Heart right ventricle (tissue), 16 donors: ENCODE measurements at regions of chr4 and their contacts with region 1.

Region 1: DNA sequence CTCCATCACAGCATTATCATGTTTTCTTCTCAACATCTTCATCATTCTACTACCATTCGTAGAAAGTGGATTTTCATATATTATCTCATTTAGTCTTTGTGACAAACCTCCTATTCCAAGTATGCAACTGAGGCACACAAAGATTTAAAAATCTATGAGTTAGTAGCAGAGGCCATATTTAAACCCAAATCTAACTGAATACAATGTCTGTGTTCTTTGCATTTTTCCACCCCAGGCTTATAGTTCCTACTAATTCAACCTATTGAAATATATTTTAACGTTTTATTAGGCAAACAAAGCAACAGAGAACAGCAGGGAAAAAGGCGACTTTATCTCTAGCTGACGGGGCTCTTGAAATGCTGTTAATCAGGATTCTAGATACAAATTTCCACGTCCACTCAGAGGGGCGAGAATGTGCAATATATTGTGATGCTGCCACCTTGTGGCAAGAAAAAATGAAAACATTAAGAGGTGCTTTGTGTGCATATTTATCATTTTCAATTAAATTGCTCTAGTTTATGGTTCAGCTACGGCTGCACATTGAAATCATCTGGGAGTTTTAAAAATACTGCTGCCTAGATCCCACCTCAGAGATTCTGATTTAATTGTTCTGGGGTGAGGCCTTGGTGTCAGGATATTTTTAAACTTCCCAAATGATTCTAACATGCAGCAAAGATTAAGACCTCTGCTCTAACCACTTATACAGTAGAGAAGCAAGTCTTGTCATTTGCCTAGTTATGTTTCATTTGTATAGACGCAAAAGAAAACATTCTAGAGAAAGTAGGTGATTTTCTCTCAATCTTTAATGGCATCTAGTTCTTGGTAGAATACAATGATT is 315.9 kb downstream of the MAPK10 start:
- DNase-seq: peak in 1 of 2 donors; percentile 46
- ATAC-seq: peak in 5 of 8 donors; percentile 53 to 79 (median 55)
- H3K4me3 ChIP-seq: no peak overlapping the region
- H3K27ac ChIP-seq: no peak overlapping the region
- H3K4me1 ChIP-seq: peaks cover 0 to 7% (median 0%) of the 10 kb centered on the region in 9 donors
- H3K27me3 ChIP-seq: no peaks in the 10 kb centered on the region
- CTCF ChIP-seq: peak; percentile 55 to 83 (median 70)

Region 2: DNA sequence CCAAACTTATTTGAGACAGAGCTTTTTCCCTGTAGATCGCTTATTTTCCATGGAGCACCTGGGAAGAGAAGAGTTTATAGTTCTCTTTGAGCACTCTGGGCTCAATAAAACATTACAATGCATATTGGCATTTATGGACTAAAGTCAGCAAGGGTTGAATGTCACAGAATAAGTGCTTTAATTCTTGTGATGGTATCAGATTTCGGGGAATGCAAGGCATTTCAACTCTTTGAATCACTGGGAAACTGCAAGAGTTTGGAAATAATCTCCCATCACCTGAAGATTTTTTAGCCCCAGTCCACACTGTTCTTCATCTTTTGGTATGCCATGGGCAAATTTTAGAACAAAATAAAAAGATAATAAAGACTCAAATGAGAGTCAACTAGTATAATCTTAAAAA is 966.0 kb before region 1 on chr4:
- intact Hi-C with region 1: loop called in 7 of 10 experiments (anchors 5 to 10 kb)
- DNase-seq: no peak
- ATAC-seq: no peak
- H3K4me3 ChIP-seq: no peak overlapping the region
- H3K27ac ChIP-seq: no peak overlapping the region
- H3K4me1 ChIP-seq: no peaks in the 10 kb centered on the region
- H3K27me3 ChIP-seq: no peaks in the 10 kb centered on the region
- CTCF ChIP-seq: no peak

Region 3: DNA sequence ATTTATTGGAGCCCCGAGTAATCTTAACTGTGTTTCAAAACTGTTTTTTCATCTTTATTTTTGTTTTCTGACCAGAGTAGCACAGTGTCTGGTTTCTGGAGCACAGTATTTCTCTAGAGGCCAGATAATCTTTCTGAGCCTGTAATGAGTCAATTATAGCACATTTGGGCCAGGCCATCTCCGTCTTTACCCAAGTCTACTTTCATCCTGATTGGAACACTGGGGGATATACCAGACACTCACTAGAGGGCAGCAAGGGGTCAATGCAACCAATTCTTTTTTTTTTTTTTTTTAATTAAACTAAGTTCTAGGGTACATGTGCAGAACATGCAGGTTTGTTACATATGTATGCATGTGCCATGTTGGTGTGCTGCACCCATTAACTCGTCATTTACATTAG is 287.0 kb before region 1 on chr4:
- intact Hi-C with region 1: loop called in 4 of 10 experiments (anchors 5 to 10 kb)
- DNase-seq: peak in 1 of 2 donors; percentile 61
- ATAC-seq: peak in 6 of 8 donors; percentile 38 to 84 (median 65)
- H3K4me3 ChIP-seq: no peak overlapping the region
- H3K27ac ChIP-seq: no peak overlapping the region
- H3K4me1 ChIP-seq: peaks cover 0 to 41% (median 25%) of the 10 kb centered on the region in 9 donors
- H3K27me3 ChIP-seq: no peaks in the 10 kb centered on the region
- CTCF ChIP-seq: peak in 7 of 9 donors; percentile 45 to 67 (median 53)

Region 4: GRCh38 chr4:85798012-85798770 is 245.8 kb before region 1 on chr4:
- intact Hi-C with region 1: loop called in 5 of 10 experiments (anchors 2 to 10 kb)
- DNase-seq: no peak
- ATAC-seq: peak in 1 of 8 donors; percentile 8
- H3K4me3 ChIP-seq: no peak overlapping the region
- H3K27ac ChIP-seq: no peak overlapping the region
- H3K4me1 ChIP-seq: peaks cover 1 to 29% (median 21%) of the 10 kb centered on the region in 9 donors
- H3K27me3 ChIP-seq: no peaks in the 10 kb centered on the region
- CTCF ChIP-seq: no peak

Region 5: GRCh38 chr4:85938062-85938461 is 105.9 kb before region 1 on chr4:
- intact Hi-C with region 1: no loop called
- DNase-seq: no peak
- ATAC-seq: no peak
- H3K4me3 ChIP-seq: no peak overlapping the region
- H3K27ac ChIP-seq: no peak overlapping the region
- H3K4me1 ChIP-seq: peaks cover 0 to 25% (median 6%) of the 10 kb centered on the region in 9 donors
- H3K27me3 ChIP-seq: no peaks in the 10 kb centered on the region
- CTCF ChIP-seq: no peak

Region 6: GRCh38 chr4:85979276-85979675 is 64.7 kb before region 1 on chr4:
- intact Hi-C with region 1: loop called in 6 of 10 experiments (anchors 5 to 10 kb)
- DNase-seq: no peak
- ATAC-seq: no peak
- H3K4me3 ChIP-seq: no peak overlapping the region
- H3K27ac ChIP-seq: no peak overlapping the region
- H3K4me1 ChIP-seq: no peaks in the 10 kb centered on the region
- H3K27me3 ChIP-seq: no peaks in the 10 kb centered on the region
- CTCF ChIP-seq: no peak